ENCODE measurements at regions of chr22 and their contacts with region 1.

Region 1: DNA sequence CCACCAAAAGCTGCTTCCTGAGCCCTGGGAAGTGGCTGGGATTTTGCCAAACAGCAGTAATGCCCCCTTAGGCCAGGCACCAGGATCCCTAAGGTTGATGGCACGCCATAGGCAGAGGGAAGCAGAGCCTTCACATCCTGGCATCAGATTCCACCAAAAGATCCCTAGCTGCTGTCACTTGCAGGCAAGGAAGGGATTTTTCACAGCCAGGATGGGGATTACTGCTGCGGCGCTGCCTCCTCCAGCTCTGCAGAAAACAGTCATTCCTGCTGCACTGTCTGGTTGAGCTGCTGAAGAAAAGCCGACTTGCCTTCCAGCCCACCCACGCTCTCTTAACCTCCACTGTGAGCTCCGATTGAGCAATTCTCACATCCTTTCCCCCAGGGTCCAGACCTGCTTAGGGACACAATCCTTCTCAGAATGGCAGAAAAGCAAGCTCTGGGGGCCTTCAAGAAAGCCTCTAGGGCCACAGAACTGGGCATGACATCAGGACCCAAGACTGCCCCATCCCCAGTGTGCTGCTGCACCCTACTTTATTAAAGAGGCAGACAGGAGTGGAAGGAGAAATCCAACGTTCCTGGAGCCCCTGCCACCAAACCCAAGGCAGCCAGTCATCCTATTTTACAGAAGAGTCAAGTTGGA is 19.9 kb downstream of the SYN3 start:
- DNase-seq: no peak
- ATAC-seq: no peak
- H3K4me3 ChIP-seq: no peak overlapping the region
- H3K27ac ChIP-seq: no peak overlapping the region
- H3K4me1 ChIP-seq: no peaks in the 10 kb centered on the region
- H3K27me3 ChIP-seq: no peaks in the 10 kb centered on the region
- CTCF ChIP-seq: no peak

Region 2: GRCh38 chr22:32058656-32059260 is 979.5 kb before region 1 on chr22:
- CTCF ChIA-PET with region 1: no interaction called
- POLR2A ChIA-PET with region 1: interaction called, 18 read pairs
- in situ Hi-C with region 1: no loop called
- intact Hi-C with region 1: no loop called
- DNase-seq: no peak
- ATAC-seq: no peak
- H3K4me3 ChIP-seq: no peak overlapping the region
- H3K27ac ChIP-seq: no peak overlapping the region
- H3K4me1 ChIP-seq: no peaks in the 10 kb centered on the region
- H3K27me3 ChIP-seq: no peaks in the 10 kb centered on the region
- CTCF ChIP-seq: no peak

Region 3: DNA sequence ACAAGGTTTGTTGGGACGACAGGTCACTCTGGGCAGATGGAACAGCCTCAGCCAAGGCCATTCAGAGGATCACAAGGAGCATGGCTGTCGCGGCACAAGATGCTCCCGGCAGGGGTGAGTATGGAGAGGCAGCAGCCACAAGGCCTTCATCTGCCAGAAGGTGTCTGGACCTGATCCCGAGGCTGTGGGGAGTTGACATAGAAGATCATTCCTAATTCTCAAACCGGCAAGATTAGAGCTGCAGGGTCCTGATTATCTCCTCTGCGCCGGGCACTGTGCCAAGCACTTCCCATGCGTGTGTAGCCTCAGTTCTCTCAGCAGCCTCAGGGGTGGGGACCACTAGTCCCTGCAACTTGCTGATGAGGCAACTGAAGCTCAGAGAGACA is 712.8 kb before region 1 on chr22:
- CTCF ChIA-PET with region 1: no interaction called
- POLR2A ChIA-PET with region 1: no interaction called
- in situ Hi-C with region 1: no loop called
- intact Hi-C with region 1: no loop called
- DNase-seq: no peak
- ATAC-seq: no peak
- H3K4me3 ChIP-seq: no peak overlapping the region
- H3K27ac ChIP-seq: no peak overlapping the region
- H3K4me1 ChIP-seq: no peaks in the 10 kb centered on the region
- H3K27me3 ChIP-seq: no peaks in the 10 kb centered on the region
- CTCF ChIP-seq: no peak

Region 4: DNA sequence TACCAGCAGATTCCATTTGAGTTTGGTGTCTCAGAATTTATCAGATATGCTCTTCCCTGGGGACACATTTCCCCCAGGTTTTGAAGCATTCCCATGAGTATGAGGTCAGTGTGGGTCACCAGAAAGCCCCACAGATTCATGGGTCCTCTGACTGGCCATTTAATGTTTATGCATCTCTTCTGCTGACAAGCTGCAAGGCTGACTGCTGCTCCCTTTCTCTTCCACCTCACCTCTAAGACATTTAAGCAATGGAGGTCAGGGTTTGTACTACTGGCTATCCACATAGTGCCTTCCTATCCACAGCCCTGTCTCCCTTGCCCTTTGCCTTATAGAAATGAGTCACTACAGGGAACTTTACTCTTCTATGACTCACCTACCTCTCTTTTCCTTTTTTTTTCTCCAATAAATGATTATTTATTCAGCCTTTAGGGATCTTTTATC is 342.8 kb before region 1 on chr22:
- CTCF ChIA-PET with region 1: interaction called, 11 read pairs
- POLR2A ChIA-PET with region 1: no interaction called
- in situ Hi-C with region 1: no loop called
- intact Hi-C with region 1: no loop called
- DNase-seq: no peak
- ATAC-seq: peak; percentile 72
- H3K4me3 ChIP-seq: no peak overlapping the region
- H3K27ac ChIP-seq: no peak overlapping the region
- H3K4me1 ChIP-seq: no peaks in the 10 kb centered on the region
- H3K27me3 ChIP-seq: no peaks in the 10 kb centered on the region
- CTCF ChIP-seq: no peak

Region 5: DNA sequence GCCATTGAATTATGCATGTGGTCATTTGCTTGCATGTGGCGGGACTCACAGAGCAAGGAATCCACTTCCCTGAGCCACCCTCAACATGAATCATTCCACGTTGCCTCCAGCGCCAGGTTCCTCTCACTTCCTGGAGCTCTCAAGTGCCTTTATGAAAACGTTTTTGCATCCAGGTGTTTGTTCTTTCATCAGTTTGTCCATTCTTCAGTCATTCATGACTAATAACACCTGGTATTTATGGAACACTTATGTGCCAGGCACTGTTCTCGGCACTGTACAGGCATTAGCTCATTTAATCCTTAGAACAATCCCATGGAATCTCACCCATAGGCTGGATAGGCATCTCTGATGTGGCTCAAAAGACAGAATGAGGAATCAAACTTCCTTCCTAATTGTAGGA is 276.1 kb after region 1 on chr22:
- CTCF ChIA-PET with region 1: no interaction called
- POLR2A ChIA-PET with region 1: no interaction called
- in situ Hi-C with region 1: no loop called
- intact Hi-C with region 1: no loop called
- DNase-seq: no peak
- ATAC-seq: no peak
- H3K4me3 ChIP-seq: no peak overlapping the region
- H3K27ac ChIP-seq: no peak overlapping the region
- H3K4me1 ChIP-seq: no peaks in the 10 kb centered on the region
- H3K27me3 ChIP-seq: no peaks in the 10 kb centered on the region; the same call in 1 of the 2 replicates
- CTCF ChIP-seq: no peak

Measured in Panc1 (cell line).